CD8-positive, alpha-beta T cell (primary cell): ENCODE measurements at regions of chr11 and their contacts with region 1.

Region 1: DNA sequence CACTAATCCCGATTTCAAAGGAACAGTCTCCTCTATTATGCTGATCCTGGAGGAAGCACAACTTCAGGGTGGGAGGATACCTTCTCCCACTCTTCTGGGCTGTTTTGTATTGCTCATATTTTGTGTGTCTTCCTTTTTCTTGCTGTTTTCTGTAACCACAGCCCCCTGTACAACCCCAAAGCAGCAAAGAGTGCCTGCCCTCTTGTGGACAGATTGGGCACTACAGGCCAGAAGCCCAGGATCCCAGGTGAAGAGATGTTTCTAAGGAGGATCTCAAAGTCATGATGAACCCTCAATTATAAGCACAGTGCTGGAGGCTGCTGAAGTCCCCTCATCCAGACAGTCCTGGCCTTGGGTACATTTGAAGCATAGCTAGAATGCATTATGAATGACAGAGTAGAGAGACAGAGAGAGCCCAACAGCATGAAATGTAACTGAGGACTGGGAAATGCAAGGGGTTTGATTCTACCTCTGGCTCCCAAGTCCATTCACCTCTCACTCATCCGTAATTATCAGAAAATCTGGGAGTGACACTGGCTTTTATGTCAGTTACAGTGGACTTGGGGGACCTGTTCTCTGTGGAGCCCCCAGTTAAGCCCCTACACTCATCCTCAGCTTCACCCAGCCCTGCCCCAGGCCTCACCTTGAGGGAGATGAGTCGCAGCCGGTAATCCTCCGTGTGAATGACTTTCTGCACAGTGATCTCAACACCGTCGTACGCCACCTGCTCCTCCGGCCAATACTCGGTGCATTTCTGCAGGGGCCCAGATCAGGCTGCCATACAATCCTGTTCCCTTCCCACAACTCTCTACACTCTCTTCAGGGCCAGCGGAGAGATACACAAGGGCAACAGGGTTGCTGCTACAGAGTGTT is 6.2 kb upstream of the IGSF22 start:
- DNase-seq: peak; percentile 54 to 82 (median 73)
- ATAC-seq: peak; percentile 87
- H3K4me3 ChIP-seq: no peak overlapping the region
- H3K4me3 Mint-ChIP-seq: no peak overlapping the region
- H3K27ac ChIP-seq: no peak overlapping the region
- H3K27ac Mint-ChIP-seq: no peak overlapping the region
- H3K4me1 ChIP-seq: peaks cover 9% of the 10 kb centered on the region
- H3K4me1 Mint-ChIP-seq: peaks cover 11% of the 10 kb centered on the region
- H3K27me3 ChIP-seq: no peaks in the 10 kb centered on the region
- H3K27me3 Mint-ChIP-seq: no peaks in the 10 kb centered on the region
- CTCF ChIP-seq: peak; percentile 97

Region 2: GRCh38 chr11:18548001-18548400 is 184.2 kb before region 1 on chr11:
- CTCF ChIA-PET with region 1: interaction called, 12 read pairs
- POLR2A ChIA-PET with region 1: no interaction called
- intact Hi-C with region 1: no loop called
- DNase-seq: no peak
- ATAC-seq: no peak
- H3K4me3 ChIP-seq: no peak overlapping the region
- H3K4me3 Mint-ChIP-seq: no peak overlapping the region
- H3K27ac ChIP-seq: no peak overlapping the region
- H3K27ac Mint-ChIP-seq: no peak overlapping the region
- H3K4me1 ChIP-seq: no peaks in the 10 kb centered on the region
- H3K4me1 Mint-ChIP-seq: no peaks in the 10 kb centered on the region
- H3K27me3 ChIP-seq: no peaks in the 10 kb centered on the region
- H3K27me3 Mint-ChIP-seq: no peaks in the 10 kb centered on the region
- CTCF ChIP-seq: no peak

Region 3: GRCh38 chr11:18706330-18707243 is 25.6 kb before region 1 on chr11:
- CTCF ChIA-PET with region 1: interaction called, 10 read pairs
- POLR2A ChIA-PET with region 1: no interaction called
- intact Hi-C with region 1: no loop called
- DNase-seq: peak; percentile 29 to 83 (median 57)
- ATAC-seq: peak; percentile 81
- H3K4me3 ChIP-seq: peak overlapping the region; percentile 55 to 83
- H3K4me3 Mint-ChIP-seq: peak overlapping the region; percentile 94
- H3K27ac ChIP-seq: peak overlapping the region; percentile 39 to 56
- H3K27ac Mint-ChIP-seq: peak overlapping the region; percentile 94
- H3K4me1 ChIP-seq: peaks cover 7% of the 10 kb centered on the region
- H3K4me1 Mint-ChIP-seq: peaks cover 22% of the 10 kb centered on the region
- H3K27me3 ChIP-seq: no peaks in the 10 kb centered on the region
- H3K27me3 Mint-ChIP-seq: no peaks in the 10 kb centered on the region
- CTCF ChIP-seq: no peak

Region 4: DNA sequence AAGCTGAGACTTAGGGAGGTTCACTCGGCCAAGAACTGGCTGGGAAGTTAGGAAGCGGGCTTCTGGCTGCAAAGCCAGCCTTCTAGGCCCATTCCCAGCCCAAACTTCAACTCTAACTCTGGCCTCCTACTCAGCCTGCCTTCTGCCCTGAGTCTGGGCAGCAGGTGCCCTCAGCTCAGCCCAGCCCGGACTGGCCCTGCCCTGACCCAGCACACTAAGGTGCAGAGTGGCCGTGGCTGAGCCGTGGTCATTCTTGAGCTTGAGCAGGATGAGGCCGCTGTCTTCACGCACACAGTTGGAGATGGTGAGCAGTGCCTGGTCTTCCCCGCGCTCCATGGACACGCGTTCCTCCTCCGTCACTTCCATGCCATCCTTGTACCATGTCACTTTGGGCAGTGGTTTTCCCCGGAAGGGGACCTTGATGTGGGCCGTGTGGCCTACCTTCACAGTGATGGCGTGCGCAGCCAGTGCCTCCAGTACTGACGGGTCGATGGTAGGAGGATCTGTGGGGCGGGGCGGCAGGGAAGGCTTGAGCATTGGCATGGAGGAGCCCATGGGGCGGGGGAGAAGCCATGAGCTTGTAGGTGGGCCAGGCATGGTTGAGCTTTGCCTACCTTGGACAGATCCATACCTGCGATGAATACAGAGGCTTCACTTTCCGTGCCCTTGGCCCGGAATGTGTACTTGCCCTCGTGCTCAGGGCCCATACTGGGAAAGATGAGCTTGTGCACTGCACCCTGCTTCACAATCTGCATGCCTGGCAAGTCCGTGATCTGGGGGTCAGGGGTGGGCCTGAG is 18.3 kb before region 1 on chr11:
- CTCF ChIA-PET with region 1: interaction called, 11 read pairs
- POLR2A ChIA-PET with region 1: no interaction called
- intact Hi-C with region 1: no loop called
- DNase-seq: no peak
- ATAC-seq: no peak
- H3K4me3 ChIP-seq: no peak overlapping the region
- H3K4me3 Mint-ChIP-seq: no peak overlapping the region
- H3K27ac ChIP-seq: no peak overlapping the region
- H3K27ac Mint-ChIP-seq: no peak overlapping the region
- H3K4me1 ChIP-seq: no peaks in the 10 kb centered on the region
- H3K4me1 Mint-ChIP-seq: no peaks in the 10 kb centered on the region
- H3K27me3 ChIP-seq: no peaks in the 10 kb centered on the region
- H3K27me3 Mint-ChIP-seq: no peaks in the 10 kb centered on the region
- CTCF ChIP-seq: no peak

Region 5: GRCh38 chr11:19027829-19028595 is 295.8 kb after region 1 on chr11:
- CTCF ChIA-PET with region 1: no interaction called
- POLR2A ChIA-PET with region 1: no interaction called
- intact Hi-C with region 1: no loop called
- DNase-seq: no peak
- ATAC-seq: no peak
- H3K4me3 ChIP-seq: no peak overlapping the region
- H3K4me3 Mint-ChIP-seq: no peak overlapping the region
- H3K27ac ChIP-seq: no peak overlapping the region
- H3K27ac Mint-ChIP-seq: no peak overlapping the region
- H3K4me1 ChIP-seq: no peaks in the 10 kb centered on the region
- H3K4me1 Mint-ChIP-seq: no peaks in the 10 kb centered on the region
- H3K27me3 ChIP-seq: no peaks in the 10 kb centered on the region
- H3K27me3 Mint-ChIP-seq: peaks cover 32% of the 10 kb centered on the region
- CTCF ChIP-seq: no peak